ENCODE measurements at regions of chr12 and their contacts with region 1.

Region 1: GRCh38 chr12:122895705-122896636 is at the start of gene VPS37B:
- DNase-seq: peak; percentile 95
- ATAC-seq: peak; percentile 29
- H3K4me3 ChIP-seq: peak within 1 kb of the TSS; percentile 74 to 98 (median 97)
- H3K4me3 Mint-ChIP-seq: peak within 1 kb of the TSS; percentile 96
- H3K27ac ChIP-seq: peak within 1 kb of the TSS; percentile 90 to 99
- H3K27ac Mint-ChIP-seq: peak within 1 kb of the TSS; percentile 94
- H3K4me1 ChIP-seq: peaks cover 90 to 91% of the 10 kb centered on the region in 2 donors
- H3K4me1 Mint-ChIP-seq: peaks cover 90% of the 10 kb centered on the region
- H3K27me3 ChIP-seq: no peaks in the 10 kb centered on the region
- H3K27me3 Mint-ChIP-seq: no peaks in the 10 kb centered on the region
- CTCF ChIP-seq: no peak
- total RNA-seq, gene VPS37B: 87.2 and 88.1 TPM in 2 replicates

Region 2: GRCh38 chr12:122721057-122721545 is 174.9 kb before region 1 on chr12:
- CTCF ChIA-PET with region 1: no interaction called
- POLR2A ChIA-PET with region 1: no interaction called
- intact Hi-C with region 1: no loop called
- DNase-seq: no peak
- ATAC-seq: no peak
- H3K4me3 ChIP-seq: no peak overlapping the region
- H3K4me3 Mint-ChIP-seq: peak overlapping the region; percentile 37
- H3K27ac ChIP-seq: no peak overlapping the region
- H3K27ac Mint-ChIP-seq: no peak overlapping the region
- H3K4me1 ChIP-seq: peaks cover 11 to 21% of the 10 kb centered on the region in 2 donors
- H3K4me1 Mint-ChIP-seq: peaks cover 34% of the 10 kb centered on the region
- H3K27me3 ChIP-seq: no peaks in the 10 kb centered on the region
- H3K27me3 Mint-ChIP-seq: peaks cover 11% of the 10 kb centered on the region
- CTCF ChIP-seq: no peak

Region 3: DNA sequence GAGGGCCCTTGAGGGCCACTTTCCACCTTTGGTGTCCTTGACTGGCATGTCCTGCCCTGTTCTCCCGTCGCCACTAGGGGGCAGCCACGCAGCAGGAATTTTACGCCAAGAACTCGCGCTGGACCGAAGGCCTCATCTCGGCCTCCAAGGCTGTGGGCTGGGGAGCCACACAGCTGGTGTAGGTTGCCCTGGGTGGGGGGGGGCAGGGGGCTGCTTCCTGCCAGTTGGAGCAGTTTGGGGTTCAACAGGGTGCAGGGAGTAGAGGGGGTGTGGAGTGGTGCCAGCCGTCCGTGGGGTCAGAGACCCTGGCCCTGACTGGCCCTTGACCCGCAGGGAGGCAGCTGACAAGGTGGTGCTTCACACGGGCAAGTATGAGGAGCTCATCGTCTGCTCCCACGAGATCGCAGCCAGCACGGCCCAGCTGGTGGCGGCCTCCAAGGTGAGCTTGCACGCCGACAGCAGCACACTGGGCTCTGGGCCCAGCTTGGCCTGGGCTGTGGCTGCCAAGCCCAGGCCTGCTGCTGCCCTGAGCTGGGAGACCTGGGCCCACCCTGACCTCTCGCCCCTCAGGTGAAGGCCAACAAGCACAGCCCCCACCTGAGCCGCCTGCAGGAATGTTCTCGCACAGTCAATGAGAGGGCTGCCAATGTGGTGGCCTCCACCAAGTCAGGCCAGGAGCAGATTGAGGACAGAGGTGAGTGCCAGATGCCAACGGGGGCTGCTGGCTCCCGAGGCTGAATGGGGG is 35.5 kb before region 1 on chr12:
- CTCF ChIA-PET with region 1: interaction called, 50 read pairs
- POLR2A ChIA-PET with region 1: interaction called, 11 read pairs
- intact Hi-C with region 1: loop called (anchors 2 kb)
- DNase-seq: peak; percentile 86
- ATAC-seq: peak; percentile 59
- H3K4me3 ChIP-seq: no peak overlapping the region
- H3K4me3 Mint-ChIP-seq: no peak overlapping the region
- H3K27ac ChIP-seq: peak overlapping the region in 1 of 2 donors; percentile 43
- H3K27ac Mint-ChIP-seq: peak overlapping the region; percentile 73
- H3K4me1 ChIP-seq: peaks cover 27 to 48% of the 10 kb centered on the region in 2 donors
- H3K4me1 Mint-ChIP-seq: peaks cover 46% of the 10 kb centered on the region
- H3K27me3 ChIP-seq: no peaks in the 10 kb centered on the region
- H3K27me3 Mint-ChIP-seq: no peaks in the 10 kb centered on the region
- CTCF ChIP-seq: peak; percentile 82

Region 4: DNA sequence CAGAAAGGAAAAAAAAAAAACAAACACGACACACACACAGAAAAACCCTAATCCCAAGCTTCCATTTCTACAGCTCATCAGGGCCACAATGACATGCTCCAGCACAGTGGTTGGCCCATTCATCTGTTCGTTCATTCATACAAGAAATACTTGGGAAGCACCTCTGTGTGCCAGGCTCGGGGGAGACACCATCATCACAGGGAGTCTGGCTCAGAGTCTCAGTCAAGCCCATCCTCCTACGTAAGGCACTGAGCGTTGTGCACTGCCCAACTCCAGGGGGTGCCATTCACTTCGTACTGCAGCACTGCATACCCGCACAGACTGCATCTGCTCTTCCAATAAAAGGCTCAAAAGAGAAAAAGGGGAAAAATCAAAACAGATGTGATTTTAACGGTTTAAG is 15.3 kb before region 1 on chr12:
- CTCF ChIA-PET with region 1: interaction called, 101 read pairs
- POLR2A ChIA-PET with region 1: interaction called, 4 read pairs
- intact Hi-C with region 1: loop called (anchors 2 kb)
- DNase-seq: peak; percentile 53
- ATAC-seq: peak; percentile 68
- H3K4me3 ChIP-seq: no peak overlapping the region
- H3K4me3 Mint-ChIP-seq: peak overlapping the region; percentile 45
- H3K27ac ChIP-seq: no peak overlapping the region
- H3K27ac Mint-ChIP-seq: peak overlapping the region; percentile 32
- H3K4me1 ChIP-seq: peaks cover 87 to 95% of the 10 kb centered on the region in 2 donors
- H3K4me1 Mint-ChIP-seq: peaks cover 88% of the 10 kb centered on the region
- H3K27me3 ChIP-seq: no peaks in the 10 kb centered on the region
- H3K27me3 Mint-ChIP-seq: no peaks in the 10 kb centered on the region
- CTCF ChIP-seq: peak; percentile 51

Region 5: DNA sequence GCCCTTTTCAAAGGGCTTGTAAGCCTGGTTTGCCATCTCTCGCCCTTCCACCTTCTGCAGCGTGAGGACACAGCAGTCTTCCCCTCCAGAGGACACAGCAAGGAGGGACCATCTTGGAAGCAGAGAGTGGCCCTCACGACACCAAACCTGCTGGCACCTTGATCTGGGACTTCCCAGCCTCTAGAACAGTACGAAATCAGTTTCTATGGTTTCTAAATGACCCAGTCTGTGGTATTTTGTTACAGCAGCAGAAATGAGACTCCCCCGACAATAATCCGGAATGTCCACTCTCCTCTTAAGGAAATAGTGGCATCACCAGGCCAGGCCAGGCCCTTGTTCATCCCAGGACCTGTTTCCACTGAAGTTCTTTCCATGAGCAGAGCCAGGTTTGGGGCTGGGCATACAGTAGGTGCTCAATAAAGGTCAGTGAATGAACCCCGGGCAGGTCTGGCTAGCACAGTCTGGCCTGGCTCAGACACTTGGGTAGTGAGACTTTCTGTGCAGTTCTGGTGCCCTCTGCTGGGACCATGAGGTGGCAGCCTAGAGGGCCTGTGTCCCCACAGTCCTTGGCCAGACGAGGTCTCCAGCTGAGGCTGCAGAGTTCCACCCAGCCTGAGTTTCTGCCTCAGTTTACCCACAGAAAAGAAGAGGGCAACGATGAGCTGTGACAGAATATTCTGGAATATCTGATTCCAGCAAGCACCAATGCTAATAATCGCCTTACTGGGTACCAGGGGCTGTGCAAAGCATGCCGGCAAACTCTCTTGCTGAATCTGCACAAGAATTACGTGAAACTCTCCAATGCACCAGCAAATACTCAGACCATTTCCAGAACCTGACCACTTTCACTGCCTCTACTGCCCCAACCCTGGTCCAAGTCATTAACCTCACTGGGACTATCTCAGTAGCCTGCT is 56.3 kb after region 1 on chr12:
- CTCF ChIA-PET with region 1: interaction called, 29 read pairs
- POLR2A ChIA-PET with region 1: interaction called, 3 read pairs
- intact Hi-C with region 1: loop called (anchors 2 kb)
- DNase-seq: peak; percentile 84
- ATAC-seq: peak; percentile 99
- H3K4me3 ChIP-seq: no peak overlapping the region
- H3K4me3 Mint-ChIP-seq: no peak overlapping the region
- H3K27ac ChIP-seq: no peak overlapping the region
- H3K27ac Mint-ChIP-seq: peak overlapping the region; percentile 37
- H3K4me1 ChIP-seq: peaks cover 10 to 17% of the 10 kb centered on the region in 2 donors
- H3K4me1 Mint-ChIP-seq: peaks cover 21% of the 10 kb centered on the region
- H3K27me3 ChIP-seq: no peaks in the 10 kb centered on the region
- H3K27me3 Mint-ChIP-seq: no peaks in the 10 kb centered on the region
- CTCF ChIP-seq: peak; percentile 91

Region 6: GRCh38 chr12:123655420-123655819 is 759.4 kb after region 1 on chr12:
- CTCF ChIA-PET with region 1: no interaction called
- POLR2A ChIA-PET with region 1: no interaction called
- intact Hi-C with region 1: no loop called
- DNase-seq: peak; percentile 21
- ATAC-seq: peak; percentile 45
- H3K4me3 ChIP-seq: no peak overlapping the region
- H3K4me3 Mint-ChIP-seq: no peak overlapping the region
- H3K27ac ChIP-seq: no peak overlapping the region
- H3K27ac Mint-ChIP-seq: peak overlapping the region; percentile 70
- H3K4me1 ChIP-seq: peaks cover 4 to 20% of the 10 kb centered on the region in 2 donors
- H3K4me1 Mint-ChIP-seq: peaks cover 39% of the 10 kb centered on the region
- H3K27me3 ChIP-seq: no peaks in the 10 kb centered on the region
- H3K27me3 Mint-ChIP-seq: no peaks in the 10 kb centered on the region
- CTCF ChIP-seq: no peak